Heart left ventricle (tissue), 16 donors: ENCODE measurements at regions of chr22 and their contacts with region 1.

Region 1: GRCh38 chr22:34135751-34136150 is 215.5 kb upstream of the LARGE1 start:
- DNase-seq: no peak
- ATAC-seq: no peak
- H3K4me3 ChIP-seq: no peak overlapping the region
- H3K27ac ChIP-seq: no peak overlapping the region
- H3K4me1 ChIP-seq: no peaks in the 10 kb centered on the region
- H3K27me3 ChIP-seq: no peaks in the 10 kb centered on the region
- CTCF ChIP-seq: no peak
- POLR2A ChIP-seq: no peak

Region 2: DNA sequence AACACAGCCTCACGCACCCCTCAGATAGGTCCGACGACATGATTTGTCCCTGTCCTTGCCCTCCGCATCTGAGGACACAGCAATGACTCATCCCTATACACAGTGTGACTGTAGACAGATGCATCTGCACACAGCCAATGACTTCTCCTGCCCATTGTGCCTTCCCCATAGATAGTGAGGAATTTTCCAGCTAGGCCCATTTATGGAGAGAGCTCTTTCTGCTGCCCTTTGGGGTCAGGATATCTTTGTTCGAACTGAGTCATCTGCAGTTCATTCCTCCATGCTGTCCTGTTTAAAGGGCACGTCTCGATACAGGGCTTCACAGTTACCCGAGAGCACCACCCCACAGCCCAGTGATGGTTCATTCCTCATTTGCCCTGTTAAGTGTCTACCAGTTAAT is 312.2 kb before region 1 on chr22:
- intact Hi-C with region 1: no loop called
- DNase-seq: peak in 4 of 5 donors; percentile 27 to 78 (median 36)
- ATAC-seq: peak; percentile 80 to 94 (median 92)
- H3K4me3 ChIP-seq: no peak overlapping the region
- H3K27ac ChIP-seq: peak overlapping the region in 11 of 12 donors; percentile 39 to 80 (median 63)
- H3K4me1 ChIP-seq: peaks cover 0 to 47% (median 13%) of the 10 kb centered on the region in 12 donors
- H3K27me3 ChIP-seq: no peaks in the 10 kb centered on the region
- CTCF ChIP-seq: no peak
- POLR2A ChIP-seq: peak in 1 of 2 donors; percentile 44

Region 3: DNA sequence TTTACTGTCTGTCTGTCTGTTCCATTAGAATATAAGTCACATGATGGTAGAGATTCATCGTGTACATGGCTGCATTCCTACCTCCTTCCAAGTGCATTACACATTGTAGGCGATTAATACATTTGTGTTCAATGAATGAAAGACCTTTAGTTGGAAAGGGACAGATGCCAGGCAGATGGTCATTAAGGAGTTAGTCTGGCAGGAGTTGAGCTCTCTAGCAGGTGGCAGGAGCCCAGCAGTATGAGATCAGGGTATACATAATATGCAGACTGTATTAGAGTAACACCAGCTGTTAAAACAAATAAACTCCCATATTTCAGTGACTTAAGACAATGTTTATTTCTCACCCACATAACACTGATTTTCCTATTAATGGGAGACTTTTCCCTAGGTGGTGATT is 67.8 kb before region 1 on chr22:
- intact Hi-C with region 1: loop called in 1 of 10 experiments (anchors 10 kb)
- DNase-seq: no peak
- ATAC-seq: no peak
- H3K4me3 ChIP-seq: no peak overlapping the region
- H3K27ac ChIP-seq: no peak overlapping the region
- H3K4me1 ChIP-seq: no peaks in the 10 kb centered on the region
- H3K27me3 ChIP-seq: peaks cover 0 to 4% (median 0%) of the 10 kb centered on the region in 9 donors
- CTCF ChIP-seq: no peak
- POLR2A ChIP-seq: no peak